AG04449 (cell line): ENCODE measurements at regions of chr13 and their contacts with region 1.

Region 1: GRCh38 chr13:48769107-48769704 is 115.5 kb downstream of the CYSLTR2 start:
- DNase-seq: peak; percentile 67
- H3K4me3 ChIP-seq: no peak overlapping the region
- CTCF ChIP-seq: peak; percentile 94

Region 2: GRCh38 chr13:48126944-48127830 is 642.0 kb before region 1 on chr13:
- CTCF ChIA-PET with region 1: interaction called, 24 read pairs
- POLR2A ChIA-PET with region 1: no interaction called
- DNase-seq: peak; percentile 14
- H3K4me3 ChIP-seq: no peak overlapping the region
- CTCF ChIP-seq: peak; percentile 45

Region 3: DNA sequence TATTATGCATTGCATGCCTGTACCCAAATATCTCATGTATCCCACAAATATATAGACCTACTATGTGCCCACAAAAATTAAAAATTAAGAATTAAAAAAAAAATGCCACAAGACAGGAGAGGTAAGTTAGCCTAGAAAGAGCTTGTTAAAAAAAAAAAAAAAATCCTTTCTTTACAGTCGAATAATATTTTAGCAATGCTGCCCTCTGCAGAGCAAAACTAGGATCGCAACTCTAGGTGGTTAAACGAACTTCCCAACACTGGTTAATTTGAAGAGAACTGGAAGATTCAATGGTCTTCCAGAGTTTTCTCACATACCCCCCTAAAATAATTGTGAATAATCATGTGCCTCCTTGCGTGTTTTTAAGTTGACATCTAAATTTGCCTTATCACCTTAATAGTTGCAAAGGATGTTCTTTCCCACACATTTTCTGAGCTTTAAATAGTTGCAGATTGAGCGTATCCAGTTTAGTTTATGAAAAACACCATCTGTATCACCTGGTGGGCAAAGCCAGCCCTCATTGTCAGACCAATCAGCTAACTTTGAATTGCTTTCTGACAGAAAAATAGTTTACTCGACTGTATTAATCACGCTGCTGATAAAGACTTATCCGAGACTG is 188.9 kb before region 1 on chr13:
- CTCF ChIA-PET with region 1: interaction called, 24 read pairs
- POLR2A ChIA-PET with region 1: no interaction called
- DNase-seq: no peak
- H3K4me3 ChIP-seq: no peak overlapping the region
- CTCF ChIP-seq: peak; percentile 36

Region 4: DNA sequence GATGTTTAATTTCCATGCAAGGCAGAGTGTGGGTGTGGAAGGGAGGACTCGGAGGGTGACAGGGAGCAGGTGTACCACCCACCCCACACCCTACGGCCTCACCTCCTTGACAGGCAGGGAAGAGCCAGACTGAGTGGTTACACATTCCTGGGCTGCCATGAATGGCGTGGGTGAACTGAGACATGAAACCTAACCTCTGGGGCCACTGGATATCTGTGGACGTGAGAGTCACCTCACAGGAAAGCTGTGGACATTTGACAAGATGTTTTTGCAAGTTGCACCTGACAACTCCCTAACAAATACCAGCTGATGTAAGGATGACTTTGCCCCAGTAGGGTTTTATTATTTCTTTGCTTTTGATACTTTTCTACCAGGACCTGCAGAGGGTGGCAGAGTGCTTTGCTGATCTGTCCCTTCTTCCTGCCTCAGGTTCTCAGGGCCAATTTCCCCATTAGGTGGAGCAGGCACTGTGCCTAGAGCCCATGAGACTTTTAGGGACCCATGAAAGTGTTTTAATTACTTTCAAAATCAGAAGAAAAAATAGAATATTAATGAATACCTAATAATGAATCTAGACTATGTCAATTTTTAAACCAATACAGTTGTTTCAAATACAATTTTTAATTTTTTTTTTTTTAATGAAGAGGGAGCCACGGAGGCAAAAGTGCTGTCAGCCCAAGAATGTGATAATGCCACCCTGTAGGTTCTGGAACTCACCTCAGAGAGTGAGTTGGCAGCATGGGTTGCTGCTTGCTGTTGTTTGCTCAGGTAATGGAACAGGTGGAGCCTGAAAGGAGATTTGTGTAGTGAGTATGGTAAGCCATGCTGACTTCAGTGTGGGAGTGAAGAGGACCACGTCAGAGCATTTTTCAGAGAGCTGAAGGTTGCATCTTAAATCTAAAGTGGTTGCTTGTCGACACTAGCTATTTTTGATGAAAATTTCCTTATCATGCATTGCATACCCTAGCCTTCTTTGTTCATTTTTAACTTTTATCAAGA is 173.5 kb before region 1 on chr13:
- CTCF ChIA-PET with region 1: interaction called, 219 read pairs
- POLR2A ChIA-PET with region 1: no interaction called
- DNase-seq: no peak
- H3K4me3 ChIP-seq: no peak overlapping the region
- CTCF ChIP-seq: peak; percentile 43

Region 5: GRCh38 chr13:48780713-48781341 is 11.6 kb after region 1 on chr13:
- CTCF ChIA-PET with region 1: interaction called, 12 read pairs
- POLR2A ChIA-PET with region 1: no interaction called
- DNase-seq: no peak
- H3K4me3 ChIP-seq: no peak overlapping the region
- CTCF ChIP-seq: no peak

Region 6: GRCh38 chr13:49711218-49711863 is 942.1 kb after region 1 on chr13:
- CTCF ChIA-PET with region 1: no interaction called
- POLR2A ChIA-PET with region 1: no interaction called
- DNase-seq: no peak
- H3K4me3 ChIP-seq: no peak overlapping the region
- CTCF ChIP-seq: no peak